WTC11 (cell line): ENCODE measurements at regions of chr7 and their contacts with region 1.

Region 1: GRCh38 chr7:68458010-68458908 is 1140.0 kb upstream of the AUTS2 start:
- DNase-seq: no peak
- ATAC-seq: no peak
- H3K4me3 Mint-ChIP-seq: no peak overlapping the region
- H3K27ac Mint-ChIP-seq: no peak overlapping the region
- H3K4me1 Mint-ChIP-seq: no peaks in the 10 kb centered on the region
- H3K27me3 Mint-ChIP-seq: no peaks in the 10 kb centered on the region; the same call in 1 of the 2 replicates
- CTCF ChIP-seq: no peak

Region 2: DNA sequence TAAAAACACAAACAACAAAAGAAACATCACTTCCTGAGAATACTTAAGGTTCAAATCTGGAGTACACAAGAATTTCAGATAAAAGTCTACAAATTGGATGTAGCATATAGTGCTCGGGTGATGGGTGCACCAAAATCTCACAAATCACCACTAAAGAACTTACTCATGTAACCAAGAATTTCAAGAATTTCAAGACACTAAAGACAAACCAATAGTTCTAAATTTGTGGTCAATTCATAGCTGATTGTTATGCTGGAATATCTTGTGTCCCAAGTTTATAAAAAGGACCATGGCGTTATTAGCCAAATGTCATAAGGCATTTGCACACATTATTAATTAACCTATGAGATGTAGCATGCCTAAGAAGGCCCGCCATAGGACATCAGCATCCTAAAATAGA is 64.1 kb before region 1 on chr7:
- CTCF ChIA-PET with region 1: no interaction called
- POLR2A ChIA-PET with region 1: no interaction called
- DNase-seq: no peak
- ATAC-seq: no peak
- H3K4me3 Mint-ChIP-seq: no peak overlapping the region
- H3K27ac Mint-ChIP-seq: no peak overlapping the region
- H3K4me1 Mint-ChIP-seq: 0 out of 2 replicates have a peak, but pooled peaks cover 4% of the 10 kb centered on the region
- H3K27me3 Mint-ChIP-seq: no peaks in the 10 kb centered on the region
- CTCF ChIP-seq: no peak

Region 3: DNA sequence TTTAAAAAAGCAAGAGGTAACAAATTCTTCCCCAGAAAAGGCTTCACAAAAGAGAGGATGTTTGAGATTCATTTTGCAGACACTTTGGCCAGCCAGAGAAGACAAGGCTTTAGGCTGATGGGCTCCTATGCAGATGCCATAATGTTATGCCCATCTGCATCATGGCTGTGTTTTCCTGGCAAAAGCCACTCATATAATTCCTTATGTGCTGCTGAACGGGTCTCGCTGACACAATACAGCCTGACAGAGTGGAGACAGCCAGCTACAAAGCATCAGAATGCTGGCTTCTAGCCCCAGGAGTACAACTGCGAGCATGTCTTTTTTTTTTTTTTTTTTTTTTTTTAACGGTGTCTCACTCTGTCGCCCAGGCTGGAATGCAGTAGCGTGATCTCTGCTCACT is 17.4 kb before region 1 on chr7:
- CTCF ChIA-PET with region 1: no interaction called
- POLR2A ChIA-PET with region 1: interaction called, 11 read pairs
- DNase-seq: no peak
- ATAC-seq: no peak
- H3K4me3 Mint-ChIP-seq: no peak overlapping the region
- H3K27ac Mint-ChIP-seq: no peak overlapping the region
- H3K4me1 Mint-ChIP-seq: no peaks in the 10 kb centered on the region
- H3K27me3 Mint-ChIP-seq: no peaks in the 10 kb centered on the region
- CTCF ChIP-seq: no peak